ENCODE measurements at regions of chr9 and their contacts with region 1.

Region 1: GRCh38 chr9:97921959-97922724 is at the start of gene TRMO:
- DNase-seq: peak; percentile 92
- H3K4me3 ChIP-seq: peak within 1 kb of the TSS; percentile 78
- CTCF ChIP-seq: peak; percentile 74

Region 2: GRCh38 chr9:97666907-97667686 is 255.0 kb before region 1 on chr9:
- CTCF ChIA-PET with region 1: no interaction called
- POLR2A ChIA-PET with region 1: no interaction called
- DNase-seq: no peak
- H3K4me3 ChIP-seq: no peak overlapping the region
- CTCF ChIP-seq: no peak

Region 3: DNA sequence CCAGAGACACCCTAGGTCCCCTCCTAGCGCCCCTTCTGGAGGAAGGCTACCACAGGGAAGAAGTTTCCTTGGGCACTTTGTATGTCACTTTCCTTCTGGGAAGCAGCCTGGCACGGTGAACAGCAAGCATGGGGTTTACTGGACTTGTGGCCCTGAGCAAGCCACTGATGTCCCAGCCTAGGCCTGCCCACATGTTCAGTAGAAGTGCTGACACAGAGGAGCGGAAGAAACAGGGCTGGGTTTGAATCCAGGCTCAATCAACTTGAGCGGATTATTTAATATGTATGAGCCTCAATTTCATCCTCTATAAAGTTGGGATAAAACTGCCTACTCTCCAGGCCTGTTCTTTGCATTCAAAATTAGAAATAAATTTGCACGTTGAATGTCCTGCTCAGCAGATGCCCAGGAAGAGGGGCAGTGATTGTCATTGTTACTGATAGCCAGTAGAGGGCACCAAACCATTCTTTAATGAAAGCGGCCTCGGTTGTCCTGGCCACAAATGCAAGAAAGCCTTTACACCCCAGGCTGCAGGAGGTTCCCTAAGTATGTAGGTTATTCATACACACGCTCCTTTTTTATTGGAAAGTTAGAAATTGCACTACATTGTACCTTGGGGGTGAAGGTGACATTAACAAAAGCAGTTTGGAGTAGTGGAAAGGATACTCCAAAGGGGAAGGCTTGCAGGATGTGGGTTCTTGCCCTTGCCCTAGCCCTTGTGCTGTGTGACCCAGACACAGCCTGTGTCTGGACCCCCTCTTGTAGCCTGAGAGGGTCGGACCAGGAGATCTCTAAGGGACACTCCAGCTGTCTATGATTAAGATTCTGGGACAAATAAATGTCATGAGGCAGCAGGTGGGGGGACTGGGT is 211.6 kb before region 1 on chr9:
- CTCF ChIA-PET with region 1: interaction called, 19 read pairs
- POLR2A ChIA-PET with region 1: no interaction called
- DNase-seq: no peak
- H3K4me3 ChIP-seq: no peak overlapping the region
- CTCF ChIP-seq: peak; percentile 70

Region 4: GRCh38 chr9:97830884-97831829 is 91.0 kb before region 1 on chr9:
- CTCF ChIA-PET with region 1: no interaction called
- POLR2A ChIA-PET with region 1: no interaction called
- DNase-seq: no peak
- H3K4me3 ChIP-seq: no peak overlapping the region
- CTCF ChIP-seq: no peak

Region 5: GRCh38 chr9:97934321-97935115 is 12.4 kb after region 1 on chr9:
- CTCF ChIA-PET with region 1: interaction called, 38 read pairs
- POLR2A ChIA-PET with region 1: no interaction called
- DNase-seq: no peak
- H3K4me3 ChIP-seq: no peak overlapping the region
- CTCF ChIP-seq: no peak

Region 6: DNA sequence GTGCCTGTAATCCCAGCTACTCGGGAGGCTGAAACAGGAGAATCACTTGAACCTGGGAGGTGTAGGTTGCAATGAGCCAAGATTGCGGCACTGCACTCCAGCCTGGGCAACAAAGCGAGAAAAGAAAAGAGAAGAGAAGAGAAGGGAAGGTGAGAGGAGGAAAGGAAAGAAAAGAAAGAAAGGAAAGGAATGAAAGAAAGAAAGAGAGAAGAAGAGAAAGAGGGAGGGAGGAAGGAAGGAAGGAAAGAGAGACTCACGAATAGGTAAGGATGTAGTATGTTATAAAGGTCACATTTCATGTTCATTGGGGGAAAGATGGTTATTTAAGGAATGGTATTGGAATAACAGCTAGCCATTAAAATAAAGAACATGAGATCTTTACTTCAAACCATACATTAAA is 50.6 kb after region 1 on chr9:
- CTCF ChIA-PET with region 1: interaction called, 16 read pairs
- POLR2A ChIA-PET with region 1: no interaction called
- DNase-seq: no peak
- H3K4me3 ChIP-seq: no peak overlapping the region
- CTCF ChIP-seq: no peak

Region 7: GRCh38 chr9:98056269-98057137 is 134.4 kb after region 1 on chr9 and contains the start of gene NANS:
- CTCF ChIA-PET with region 1: interaction called, 29 read pairs
- POLR2A ChIA-PET with region 1: no interaction called
- DNase-seq: peak; percentile 76
- H3K4me3 ChIP-seq: peak within 1 kb of the TSS; percentile 89
- CTCF ChIP-seq: peak; percentile 16

Region 8: DNA sequence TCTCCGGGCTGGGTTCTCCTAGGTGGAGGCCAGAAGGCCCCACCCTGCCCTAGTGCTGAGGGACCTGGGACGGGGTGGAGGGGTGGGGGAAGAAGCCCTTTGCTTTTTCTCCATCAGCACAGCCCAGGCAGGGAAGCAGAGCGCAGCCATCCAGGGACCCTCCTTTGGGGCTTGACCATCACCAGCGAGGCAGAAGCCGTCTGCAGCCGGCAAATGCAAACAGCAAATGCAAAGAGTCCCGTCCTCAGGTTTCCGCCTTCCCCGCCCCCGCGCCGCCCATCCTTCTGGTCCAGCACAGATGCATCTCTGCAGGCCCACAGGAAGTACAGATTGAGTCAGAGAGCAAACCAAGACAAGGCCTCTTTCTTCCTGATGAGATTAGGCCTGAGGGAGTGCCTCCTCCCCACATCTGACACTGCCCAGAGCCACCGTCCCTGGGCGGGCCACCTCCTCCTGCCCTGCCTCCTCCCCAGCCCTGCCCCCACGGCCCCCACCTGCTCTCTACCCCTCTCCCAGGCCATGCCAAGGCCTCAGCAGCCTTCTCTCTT is 246.9 kb after region 1 on chr9:
- CTCF ChIA-PET with region 1: no interaction called
- POLR2A ChIA-PET with region 1: no interaction called
- DNase-seq: no peak
- H3K4me3 ChIP-seq: no peak overlapping the region
- CTCF ChIP-seq: no peak

Region 9: GRCh38 chr9:98255578-98256296 is 333.6 kb after region 1 on chr9 and contains the start of gene TBC1D2:
- CTCF ChIA-PET with region 1: interaction called, 29 read pairs
- POLR2A ChIA-PET with region 1: no interaction called
- DNase-seq: peak; percentile 45
- H3K4me3 ChIP-seq: peak within 1 kb of the TSS; percentile 87
- CTCF ChIP-seq: no peak